ENCODE measurements at regions of chr6 and their contacts with region 1.

Region 1: DNA sequence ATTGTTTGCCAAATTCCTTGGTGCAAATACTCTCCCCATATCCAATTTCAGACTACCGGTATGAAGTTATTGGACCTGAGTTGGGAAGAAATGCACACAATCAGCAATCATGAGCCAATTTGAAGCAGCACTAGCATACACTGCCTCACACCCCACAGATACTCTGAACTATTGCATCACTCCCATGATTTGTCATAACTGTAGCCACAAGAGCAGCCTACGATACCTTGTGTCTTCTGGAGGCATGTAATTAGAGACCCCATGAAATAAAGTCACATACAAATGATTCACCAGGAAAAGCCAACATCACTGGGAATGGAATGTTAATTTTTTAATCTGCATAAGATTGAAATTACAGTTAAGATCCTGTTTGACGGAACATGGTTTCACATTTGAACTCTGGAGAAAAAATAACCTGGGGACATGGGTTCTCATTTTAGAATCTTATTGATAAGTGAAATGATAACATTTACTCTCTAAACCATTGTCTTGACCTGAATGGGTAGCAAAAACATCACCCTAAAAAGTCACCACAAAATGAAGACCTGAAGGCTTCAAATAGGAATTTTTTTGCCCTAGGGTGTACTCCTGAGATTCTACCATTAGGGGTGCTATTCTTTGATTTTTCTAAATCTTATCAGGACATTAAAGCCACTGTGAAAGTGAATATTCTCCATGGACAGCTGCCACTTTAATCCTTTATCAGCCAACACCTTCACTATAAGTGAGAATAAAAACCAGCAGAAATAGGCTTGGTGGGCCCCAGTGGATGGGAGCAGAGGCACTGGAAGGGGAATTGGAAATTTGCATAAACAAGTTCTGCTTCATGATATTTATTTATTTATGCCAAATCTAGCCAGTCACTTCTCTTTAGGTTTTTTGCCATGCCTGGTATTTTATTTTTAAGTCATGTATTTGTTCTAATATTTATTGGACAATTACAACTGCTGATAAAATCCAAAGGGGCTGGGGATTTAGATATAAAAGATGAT is 34.5 kb upstream of the HBS1L start:
- DNase-seq: peak; percentile 54
- ATAC-seq: peak; percentile 77
- H3K4me3 Mint-ChIP-seq: peak overlapping the region; percentile 48
- H3K27ac Mint-ChIP-seq: peak overlapping the region; percentile 93
- H3K4me1 Mint-ChIP-seq: peaks cover 86% of the 10 kb centered on the region
- H3K27me3 Mint-ChIP-seq: no peaks in the 10 kb centered on the region

Region 2: GRCh38 chr6:135014353-135014832 is 74.7 kb before region 1 on chr6:
- CTCF ChIA-PET with region 1: no interaction called
- POLR2A ChIA-PET with region 1: no interaction called
- intact Hi-C with region 1: loop called (anchors 1 to 2 kb)
- DNase-seq: peak; percentile 23
- ATAC-seq: peak; percentile 87
- H3K4me3 Mint-ChIP-seq: peak overlapping the region; percentile 18
- H3K27ac Mint-ChIP-seq: peak overlapping the region; percentile 45
- H3K4me1 Mint-ChIP-seq: peaks cover 59% of the 10 kb centered on the region
- H3K27me3 Mint-ChIP-seq: no peaks in the 10 kb centered on the region

Region 3: DNA sequence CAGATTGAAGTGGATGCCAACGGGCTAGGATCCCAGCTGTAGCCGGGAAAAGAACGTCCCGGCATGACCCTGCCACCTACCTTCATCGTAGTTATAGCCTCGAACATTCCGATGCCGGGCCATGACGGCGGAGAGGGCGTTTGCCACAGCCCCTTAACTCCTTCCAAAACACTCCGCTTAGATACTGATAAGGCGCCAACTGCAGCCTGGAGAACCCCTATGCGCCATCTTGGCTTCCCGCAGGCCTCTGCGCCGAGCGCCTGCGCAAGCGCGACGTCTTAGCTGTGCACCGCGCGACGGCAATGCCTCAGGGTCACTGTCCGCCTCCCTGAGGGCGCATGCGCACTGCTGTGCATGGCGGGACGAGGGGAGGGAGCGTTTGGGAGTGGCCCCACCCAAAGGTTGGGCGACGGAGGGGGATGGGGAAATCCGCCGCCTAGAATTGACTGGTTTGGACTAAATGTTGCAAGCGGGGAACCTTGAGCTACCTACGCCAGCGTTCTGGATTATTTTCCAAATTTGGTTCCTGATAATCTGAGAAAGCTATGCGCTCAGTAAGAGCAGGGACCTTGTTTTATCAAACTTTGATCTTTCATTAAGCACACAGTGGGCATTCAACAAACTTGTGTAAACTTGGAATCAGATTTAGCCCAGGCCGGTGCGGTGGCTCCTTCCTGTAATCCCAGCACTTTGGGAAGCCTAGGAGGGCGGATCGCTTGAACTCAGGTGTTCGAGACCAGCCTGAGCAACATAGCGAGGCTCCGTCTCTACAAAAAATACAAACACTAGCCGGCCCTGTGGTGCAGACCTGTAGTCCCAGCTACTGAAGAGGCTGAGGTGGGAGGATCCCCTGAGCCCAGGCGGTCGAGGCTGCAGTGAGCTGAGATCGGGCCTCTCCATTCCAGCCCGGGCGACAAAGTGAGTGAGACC is 34.3 kb before region 1 on chr6 and contains the start of gene HBS1L:
- CTCF ChIA-PET with region 1: interaction called, 9 read pairs
- POLR2A ChIA-PET with region 1: interaction called, 10 read pairs
- intact Hi-C with region 1: loop called (anchors 1 kb)
- DNase-seq: peak; percentile 99
- ATAC-seq: peak; percentile 96
- H3K4me3 Mint-ChIP-seq: peak within 1 kb of the TSS; percentile 94
- H3K27ac Mint-ChIP-seq: peak within 1 kb of the TSS; percentile 96
- H3K4me1 Mint-ChIP-seq: peaks cover 22% of the 10 kb centered on the region
- H3K27me3 Mint-ChIP-seq: no peaks in the 10 kb centered on the region
- total RNA-seq, gene HBS1L: 133 to 141 TPM

Region 4: GRCh38 chr6:135128268-135128914 is 39.3 kb after region 1 on chr6:
- CTCF ChIA-PET with region 1: interaction called, 7 read pairs
- POLR2A ChIA-PET with region 1: interaction called, 5 read pairs
- intact Hi-C with region 1: loop called (anchors 1 kb)
- DNase-seq: peak; percentile 83
- ATAC-seq: peak; percentile 97
- H3K4me3 Mint-ChIP-seq: peak overlapping the region; percentile 54
- H3K27ac Mint-ChIP-seq: peak overlapping the region; percentile 87
- H3K4me1 Mint-ChIP-seq: peaks cover 44% of the 10 kb centered on the region
- H3K27me3 Mint-ChIP-seq: no peaks in the 10 kb centered on the region

Region 5: GRCh38 chr6:135162678-135163439 is 73.7 kb after region 1 on chr6:
- CTCF ChIA-PET with region 1: interaction called, 9 read pairs
- POLR2A ChIA-PET with region 1: no interaction called
- intact Hi-C with region 1: loop called in 1 of 2 experiments (anchors 1 kb)
- DNase-seq: peak; percentile 67
- ATAC-seq: no peak
- H3K4me3 Mint-ChIP-seq: peak overlapping the region; percentile 24
- H3K27ac Mint-ChIP-seq: peak overlapping the region; percentile 94
- H3K4me1 Mint-ChIP-seq: peaks cover 64% of the 10 kb centered on the region
- H3K27me3 Mint-ChIP-seq: no peaks in the 10 kb centered on the region

Region 6: GRCh38 chr6:135774006-135774405 is 684.9 kb after region 1 on chr6:
- CTCF ChIA-PET with region 1: no interaction called
- POLR2A ChIA-PET with region 1: no interaction called
- intact Hi-C with region 1: no loop called
- DNase-seq: no peak
- ATAC-seq: no peak
- H3K4me3 Mint-ChIP-seq: no peak overlapping the region
- H3K27ac Mint-ChIP-seq: no peak overlapping the region
- H3K4me1 Mint-ChIP-seq: no peaks in the 10 kb centered on the region
- H3K27me3 Mint-ChIP-seq: no peaks in the 10 kb centered on the region

Measured in activated CD4-positive, alpha-beta T cell treated with anti-CD3 and anti-CD28 coated beads for 36 hours (primary cell).